Activated T-helper 1 cell treated with anti-CD3 and anti-CD28 coated beads, Interleukin-12 subunit alpha, Interleukin-12 subunit beta, Interleukin-2, Interleukin-4 antibody, amounts not matched to agents 30 ng/mL and 10 ng/mL and 1 ng/mL, durations not matched to agents 14 hours and 24 hours and 36 hours (primary cell): ENCODE measurements at regions of chr6 and their contacts with region 1.

Region 1: DNA sequence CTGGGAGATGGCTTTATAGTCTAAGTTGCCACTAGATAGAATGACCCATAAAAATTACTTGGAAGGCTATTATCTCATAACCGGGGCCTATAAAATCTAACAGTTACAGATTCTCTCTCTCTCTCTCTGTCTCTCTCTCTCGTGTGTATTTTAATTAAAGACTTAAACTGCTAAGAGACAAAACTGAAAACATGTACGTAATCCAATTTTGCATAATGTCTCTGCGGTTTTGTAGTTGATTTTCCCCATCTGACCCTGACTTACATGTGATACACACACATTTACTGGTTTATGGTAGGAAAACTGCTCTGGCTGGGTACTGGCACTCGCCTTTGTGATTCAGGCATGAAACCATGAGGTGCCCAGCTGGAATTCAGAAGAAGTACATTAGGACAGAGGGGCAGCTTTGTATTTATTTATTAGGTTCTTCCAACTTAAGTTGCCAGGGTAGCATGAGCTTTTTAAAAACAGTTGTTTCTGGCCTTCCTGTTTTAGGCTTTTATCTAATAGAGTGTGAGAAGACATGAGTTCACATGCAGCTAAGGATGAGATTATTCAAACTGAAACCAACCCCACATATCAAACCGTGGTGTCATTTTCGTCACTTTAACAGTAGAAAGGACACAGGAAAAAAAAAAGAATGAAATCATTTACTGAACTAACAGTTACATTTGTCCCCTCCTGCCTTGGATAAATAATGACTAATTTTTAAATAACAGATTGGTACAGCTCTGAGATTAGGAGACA is 182.5 kb downstream of the GMPR start:
- DNase-seq: peak; percentile 47
- H3K4me3 Mint-ChIP-seq: peak overlapping the region; percentile 73
- H3K27ac Mint-ChIP-seq: peak overlapping the region; percentile 95
- H3K4me1 Mint-ChIP-seq: peaks cover 63% of the 10 kb centered on the region
- H3K27me3 Mint-ChIP-seq: no peaks in the 10 kb centered on the region

Region 2: GRCh38 chr6:15901141-15902115 is 519.5 kb before region 1 on chr6:
- intact Hi-C with region 1: no loop called
- DNase-seq: peak; percentile 44
- H3K4me3 Mint-ChIP-seq: peak overlapping the region; percentile 50
- H3K27ac Mint-ChIP-seq: peak overlapping the region; percentile 87
- H3K4me1 Mint-ChIP-seq: peaks cover 42% of the 10 kb centered on the region
- H3K27me3 Mint-ChIP-seq: no peaks in the 10 kb centered on the region

Region 3: GRCh38 chr6:16136621-16137450 is 284.1 kb before region 1 on chr6:
- intact Hi-C with region 1: no loop called
- DNase-seq: no peak
- H3K4me3 Mint-ChIP-seq: peak overlapping the region; percentile 73
- H3K27ac Mint-ChIP-seq: peak overlapping the region; percentile 95
- H3K4me1 Mint-ChIP-seq: peaks cover 78% of the 10 kb centered on the region
- H3K27me3 Mint-ChIP-seq: no peaks in the 10 kb centered on the region

Region 4: DNA sequence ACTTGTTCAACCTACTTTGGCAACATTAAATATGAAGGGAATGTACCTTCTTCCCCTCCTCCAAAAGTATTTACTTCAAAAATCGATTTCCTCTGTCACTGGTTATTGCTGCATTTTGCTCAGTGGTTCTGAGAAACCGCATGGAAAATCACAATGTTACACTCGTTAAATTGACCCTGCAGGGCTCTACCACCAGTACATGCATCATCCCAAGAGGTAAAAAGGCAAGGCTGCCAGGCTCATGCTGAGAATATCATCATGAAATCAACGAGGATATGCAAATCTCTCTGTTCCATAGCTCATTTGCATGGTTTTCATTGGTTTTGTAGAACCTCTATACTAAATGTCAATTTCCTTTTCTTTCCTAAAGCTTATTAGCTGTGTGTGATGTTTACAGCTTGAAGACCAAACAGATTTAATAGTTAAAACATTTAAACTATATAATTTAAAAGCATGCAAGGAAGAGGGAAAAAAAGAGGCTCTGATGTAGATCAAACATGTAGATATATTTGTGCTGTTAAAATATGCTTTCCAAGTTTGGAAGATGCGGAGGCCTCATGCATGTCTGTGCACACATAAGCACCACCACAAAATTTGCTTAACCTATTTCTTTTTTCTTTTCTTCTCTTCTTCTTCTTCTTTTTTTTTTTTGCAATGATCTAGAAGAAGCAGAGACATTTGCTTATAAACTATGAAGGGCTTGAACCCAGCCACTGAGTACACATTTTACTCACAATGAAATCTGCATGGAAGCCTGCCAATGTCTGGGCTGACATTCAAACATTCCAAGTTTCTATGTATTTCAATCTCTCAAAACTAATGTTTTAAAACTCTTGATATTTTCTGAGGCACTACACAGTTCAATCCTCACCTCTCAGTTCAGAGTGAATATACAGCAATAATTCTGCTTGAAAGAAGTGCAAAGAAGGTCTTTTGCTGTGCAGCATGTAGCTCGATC is 11.5 kb after region 1 on chr6:
- intact Hi-C with region 1: loop called (anchors 1 kb)
- DNase-seq: no peak
- H3K4me3 Mint-ChIP-seq: no peak overlapping the region
- H3K27ac Mint-ChIP-seq: peak overlapping the region; percentile 2
- H3K4me1 Mint-ChIP-seq: peaks cover 68% of the 10 kb centered on the region
- H3K27me3 Mint-ChIP-seq: no peaks in the 10 kb centered on the region

Region 5: DNA sequence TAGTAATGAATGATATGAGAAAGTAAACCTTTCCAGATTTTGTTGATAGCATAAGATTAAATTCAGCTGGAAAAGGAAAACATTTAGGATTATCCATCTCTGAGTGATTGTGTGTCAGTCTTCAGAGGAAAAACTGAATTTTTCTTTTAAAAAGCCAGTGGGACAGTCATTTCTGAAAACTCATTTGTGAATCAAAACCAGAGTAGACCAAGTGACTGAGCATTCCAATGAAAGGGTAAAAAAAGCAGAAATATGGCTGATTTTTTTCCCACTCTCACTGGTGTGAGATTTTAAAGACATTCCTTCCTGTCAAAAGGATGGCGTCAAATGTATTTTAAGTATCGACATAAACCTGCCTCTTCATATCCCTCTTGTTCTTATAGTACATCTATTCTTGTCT is 31.5 kb after region 1 on chr6:
- intact Hi-C with region 1: loop called (anchors 1 kb)
- DNase-seq: no peak
- H3K4me3 Mint-ChIP-seq: no peak overlapping the region
- H3K27ac Mint-ChIP-seq: no peak overlapping the region
- H3K4me1 Mint-ChIP-seq: peaks cover 37% of the 10 kb centered on the region
- H3K27me3 Mint-ChIP-seq: no peaks in the 10 kb centered on the region

Region 6: GRCh38 chr6:16481697-16482399 is 61.0 kb after region 1 on chr6:
- intact Hi-C with region 1: loop called (anchors 1 kb)
- DNase-seq: peak; percentile 74
- H3K4me3 Mint-ChIP-seq: peak overlapping the region; percentile 56
- H3K27ac Mint-ChIP-seq: peak overlapping the region; percentile 97
- H3K4me1 Mint-ChIP-seq: peaks cover 89% of the 10 kb centered on the region
- H3K27me3 Mint-ChIP-seq: no peaks in the 10 kb centered on the region

Region 7: DNA sequence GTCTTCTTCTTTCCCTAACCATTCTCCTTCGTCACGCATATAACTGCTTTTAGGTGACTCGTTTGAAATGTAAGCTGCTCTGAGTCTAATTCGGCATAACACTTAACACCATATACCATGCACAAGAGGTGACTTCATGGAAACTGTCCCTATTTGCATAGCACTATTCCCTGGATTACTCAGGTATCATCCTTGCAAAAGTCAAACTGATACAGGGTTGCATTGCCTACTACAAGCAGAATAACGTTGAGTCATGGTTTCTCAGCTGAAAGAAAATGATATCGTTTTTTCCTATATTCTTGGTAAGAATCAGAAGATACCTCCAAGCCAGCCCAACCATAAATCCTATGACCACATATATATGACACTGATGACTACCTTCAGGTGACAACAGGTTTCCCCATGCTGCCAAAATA is 112.8 kb after region 1 on chr6:
- intact Hi-C with region 1: loop called (anchors 1 kb)
- DNase-seq: no peak
- H3K4me3 Mint-ChIP-seq: no peak overlapping the region
- H3K27ac Mint-ChIP-seq: peak overlapping the region; percentile 83
- H3K4me1 Mint-ChIP-seq: peaks cover 45% of the 10 kb centered on the region
- H3K27me3 Mint-ChIP-seq: no peaks in the 10 kb centered on the region

Region 8: DNA sequence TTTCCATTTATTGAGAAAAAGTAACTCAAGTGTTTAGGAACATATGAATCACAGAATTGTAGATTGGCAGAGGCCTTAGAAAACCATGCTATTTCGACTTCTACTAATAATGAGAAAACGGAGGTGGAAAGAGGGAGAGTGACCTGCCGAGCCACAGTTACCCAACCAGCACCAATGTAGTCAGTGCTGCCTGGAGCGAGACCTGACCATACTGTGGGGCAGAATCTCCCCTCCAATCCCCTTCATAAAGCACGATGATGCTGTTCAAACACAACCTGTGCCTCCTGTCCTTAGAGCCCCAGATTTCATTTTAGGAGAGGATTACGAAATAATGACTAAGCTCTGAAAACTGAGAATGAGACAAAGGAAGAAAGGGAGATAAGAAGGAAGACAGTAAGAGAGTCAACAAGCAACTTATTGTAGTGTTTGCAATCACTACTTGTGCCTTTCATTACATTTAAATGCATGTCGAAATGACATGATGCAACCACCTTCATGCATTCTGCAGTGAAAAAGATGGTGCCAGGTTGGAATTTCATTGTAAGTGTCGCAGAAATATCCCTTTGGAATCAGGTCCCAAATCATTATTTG is 269.8 kb after region 1 on chr6:
- intact Hi-C with region 1: loop called (anchors 2 kb)
- DNase-seq: no peak
- H3K4me3 Mint-ChIP-seq: peak overlapping the region; percentile 70
- H3K27ac Mint-ChIP-seq: peak overlapping the region; percentile 98
- H3K4me1 Mint-ChIP-seq: peaks cover 90% of the 10 kb centered on the region
- H3K27me3 Mint-ChIP-seq: no peaks in the 10 kb centered on the region